T-cell (primary cell): ENCODE measurements at regions of chr15 and their contacts with region 1.

Region 1: DNA sequence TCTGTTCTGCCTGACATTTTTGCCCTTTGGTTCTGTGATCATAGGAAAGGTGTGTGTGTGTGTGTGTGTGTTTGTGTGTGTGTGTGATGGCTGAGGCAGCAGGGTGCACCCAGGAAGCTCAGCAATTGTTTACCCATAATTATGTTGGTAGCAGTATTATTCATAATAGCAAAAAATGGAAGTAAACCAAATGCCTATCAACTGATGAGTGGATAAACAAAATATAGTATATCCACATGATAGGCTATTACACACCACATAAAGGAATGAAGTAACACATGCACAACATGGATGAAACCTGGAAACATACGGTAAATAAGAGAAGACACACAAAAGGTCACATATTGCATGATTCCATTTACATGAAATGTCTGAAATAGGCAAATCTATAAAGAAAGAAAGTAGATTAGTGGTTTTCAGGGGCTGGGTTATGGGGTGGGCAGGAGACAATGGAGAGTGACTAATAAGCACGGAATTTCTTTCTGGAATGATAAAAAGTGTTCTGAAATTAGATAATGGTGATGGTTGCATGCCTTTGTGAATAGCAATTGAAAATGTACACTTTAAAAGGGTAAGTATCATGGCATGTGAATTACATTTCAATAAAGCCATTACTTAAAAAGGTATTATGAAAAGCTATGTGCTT is 167.2 kb downstream of the POLR2M start:
- DNase-seq: no peak
- ATAC-seq: no peak
- H3K4me3 ChIP-seq: no peak overlapping the region
- H3K4me3 Mint-ChIP-seq: no peak overlapping the region
- H3K27ac ChIP-seq: no peak overlapping the region
- H3K27ac Mint-ChIP-seq: no peak overlapping the region
- H3K4me1 ChIP-seq: no peaks in the 10 kb centered on the region
- H3K4me1 Mint-ChIP-seq: peaks cover 0 to 2% (median 0%) of the 10 kb centered on the region in 3 donors
- H3K27me3 ChIP-seq: peaks cover 0 to 9% of the 10 kb centered on the region in 2 experiments
- H3K27me3 Mint-ChIP-seq: peaks cover 37 to 54% of the 10 kb centered on the region in 2 donors

Region 2: DNA sequence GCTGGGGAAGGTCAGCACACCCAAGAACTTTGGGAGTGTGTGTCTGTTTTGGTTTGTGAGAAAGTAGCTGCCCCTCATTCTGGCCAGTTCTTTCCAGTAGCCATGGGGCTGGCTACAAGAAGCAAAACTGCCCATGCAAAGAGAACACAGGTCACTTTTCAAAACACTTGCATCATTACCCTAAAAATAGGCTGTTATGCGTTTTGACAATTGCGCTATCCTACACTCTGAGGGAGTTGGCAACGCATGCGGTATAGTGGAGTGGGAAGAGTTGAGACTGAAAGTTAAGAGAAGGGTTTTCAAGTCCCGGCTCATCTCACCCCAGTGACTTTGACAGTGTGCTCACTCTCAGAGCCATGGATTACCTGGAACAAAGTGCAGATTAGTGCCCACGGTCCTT is 323.8 kb before region 1 on chr15:
- CTCF ChIA-PET with region 1: interaction called in 1 of 2 experiments, 25 read pairs
- POLR2A ChIA-PET with region 1: no interaction called
- DNase-seq: no peak
- ATAC-seq: no peak
- H3K4me3 ChIP-seq: no peak overlapping the region
- H3K4me3 Mint-ChIP-seq: no peak overlapping the region
- H3K27ac ChIP-seq: no peak overlapping the region
- H3K27ac Mint-ChIP-seq: no peak overlapping the region
- H3K4me1 ChIP-seq: no peaks in the 10 kb centered on the region
- H3K4me1 Mint-ChIP-seq: no peaks in the 10 kb centered on the region
- H3K27me3 ChIP-seq: peaks cover 0 to 31% of the 10 kb centered on the region in 2 experiments
- H3K27me3 Mint-ChIP-seq: peaks cover 3 to 5% of the 10 kb centered on the region in 2 donors

Region 3: DNA sequence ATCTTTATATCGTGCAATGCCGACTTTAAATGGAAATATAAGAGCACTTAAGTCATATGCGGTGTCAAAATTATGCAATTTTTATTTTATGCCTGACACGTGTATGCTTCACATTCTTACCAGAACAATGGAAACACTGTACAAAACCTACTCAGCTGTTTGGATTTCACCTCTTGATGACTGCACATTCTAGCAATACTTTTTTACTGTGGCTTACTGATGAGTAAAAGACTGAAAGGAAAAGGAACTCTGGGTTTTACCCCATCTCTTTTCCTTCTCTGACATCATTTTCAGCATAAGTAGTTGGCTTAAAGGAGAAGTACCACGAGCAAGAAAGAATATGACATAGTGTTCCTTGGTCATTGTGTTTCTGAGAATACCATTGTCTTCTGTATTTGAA is 24.4 kb before region 1 on chr15:
- CTCF ChIA-PET with region 1: no interaction called
- POLR2A ChIA-PET with region 1: no interaction called
- DNase-seq: no peak
- ATAC-seq: no peak
- H3K4me3 ChIP-seq: no peak overlapping the region
- H3K4me3 Mint-ChIP-seq: no peak overlapping the region
- H3K27ac ChIP-seq: no peak overlapping the region
- H3K27ac Mint-ChIP-seq: no peak overlapping the region
- H3K4me1 ChIP-seq: no peaks in the 10 kb centered on the region
- H3K4me1 Mint-ChIP-seq: peaks cover 0 to 4% (median 0%) of the 10 kb centered on the region in 3 donors
- H3K27me3 ChIP-seq: peaks cover 0 to 5% of the 10 kb centered on the region in 2 experiments
- H3K27me3 Mint-ChIP-seq: peaks cover 12 to 29% of the 10 kb centered on the region in 2 donors

Region 4: GRCh38 chr15:57861036-57861638 is 12.6 kb before region 1 on chr15:
- CTCF ChIA-PET with region 1: interaction called, 3 to 14 read pairs
- POLR2A ChIA-PET with region 1: no interaction called
- DNase-seq: peak in 13 of 35 experiments; percentile 2 to 72 (median 15)
- ATAC-seq: peak in 1 of 4 experiments; percentile 30
- H3K4me3 ChIP-seq: no peak overlapping the region
- H3K4me3 Mint-ChIP-seq: no peak overlapping the region
- H3K27ac ChIP-seq: no peak overlapping the region
- H3K27ac Mint-ChIP-seq: no peak overlapping the region
- H3K4me1 ChIP-seq: no peaks in the 10 kb centered on the region
- H3K4me1 Mint-ChIP-seq: no peaks in the 10 kb centered on the region
- H3K27me3 ChIP-seq: peaks cover 0 to 8% of the 10 kb centered on the region in 2 experiments
- H3K27me3 Mint-ChIP-seq: peaks cover 21 to 38% of the 10 kb centered on the region in 2 donors

Region 5: GRCh38 chr15:57890351-57890750 is 16.7 kb after region 1 on chr15:
- CTCF ChIA-PET with region 1: no interaction called
- POLR2A ChIA-PET with region 1: no interaction called
- DNase-seq: no peak
- ATAC-seq: no peak
- H3K4me3 ChIP-seq: no peak overlapping the region
- H3K4me3 Mint-ChIP-seq: no peak overlapping the region
- H3K27ac ChIP-seq: no peak overlapping the region
- H3K27ac Mint-ChIP-seq: no peak overlapping the region
- H3K4me1 ChIP-seq: no peaks in the 10 kb centered on the region
- H3K4me1 Mint-ChIP-seq: no peaks in the 10 kb centered on the region
- H3K27me3 ChIP-seq: peaks cover 0 to 4% of the 10 kb centered on the region in 2 experiments
- H3K27me3 Mint-ChIP-seq: peaks cover 15 to 25% of the 10 kb centered on the region in 2 donors